ENCODE measurements at regions of chr2 and their contacts with region 1.

Region 1: DNA sequence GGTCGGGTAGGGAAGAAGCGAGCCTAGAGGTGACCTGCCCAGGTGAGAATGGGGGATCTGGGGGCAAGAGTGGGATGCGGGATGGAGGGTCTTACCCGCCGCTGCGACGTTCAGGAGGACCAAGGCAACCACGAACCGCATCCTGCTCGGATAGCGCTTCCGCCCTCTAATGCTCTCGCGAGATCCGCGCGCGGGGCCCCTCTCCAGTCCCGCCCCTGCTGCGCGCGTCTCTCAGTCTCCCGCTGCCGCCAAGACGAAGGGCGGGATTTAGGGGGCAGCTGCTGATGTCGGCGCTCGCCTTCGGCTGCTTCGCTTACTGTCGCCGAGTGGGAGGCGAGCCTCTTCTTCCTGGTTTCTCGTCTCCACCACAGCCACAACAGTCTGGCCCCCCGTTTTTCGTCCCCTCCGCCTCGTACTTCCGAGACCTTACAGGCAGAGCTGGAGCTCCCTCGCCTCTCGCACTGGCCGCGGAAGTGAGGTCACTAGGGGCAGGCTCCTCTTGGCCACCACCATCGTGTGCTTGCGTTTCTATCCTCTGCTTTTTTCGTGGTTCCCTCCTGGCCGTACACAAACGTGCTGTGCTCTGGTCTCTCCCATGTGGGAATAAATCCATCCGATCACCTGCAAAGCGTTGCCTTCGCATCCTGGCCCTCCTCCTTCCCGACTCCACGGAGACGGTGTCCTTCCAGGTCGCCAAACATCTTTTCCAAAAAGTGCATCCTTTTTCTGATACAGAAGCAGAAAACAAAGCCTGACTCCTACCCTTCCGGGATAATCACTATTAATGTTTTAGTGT is at the start of gene TGOLN2:
- DNase-seq: peak; percentile 88
- ATAC-seq: peak; percentile 92
- H3K4me3 Mint-ChIP-seq: peak within 1 kb of the TSS; percentile 97
- H3K27ac Mint-ChIP-seq: peak within 1 kb of the TSS; percentile 100
- H3K4me1 Mint-ChIP-seq: peaks cover 45% of the 10 kb centered on the region
- H3K27me3 Mint-ChIP-seq: no peaks in the 10 kb centered on the region
- CTCF ChIP-seq: no peak
- total RNA-seq, gene TGOLN2: 42.2 to 43.9 TPM (median 43.7 TPM) in 3 replicates

Region 2: GRCh38 chr2:85266146-85267041 is 61.6 kb before region 1 on chr2:
- CTCF ChIA-PET with region 1: no interaction called
- POLR2A ChIA-PET with region 1: no interaction called
- DNase-seq: peak; percentile 85
- ATAC-seq: peak; percentile 63
- H3K4me3 Mint-ChIP-seq: no peak overlapping the region
- H3K27ac Mint-ChIP-seq: peak overlapping the region; percentile 67
- H3K4me1 Mint-ChIP-seq: peaks cover 72% of the 10 kb centered on the region
- H3K27me3 Mint-ChIP-seq: no peaks in the 10 kb centered on the region
- CTCF ChIP-seq: peak; percentile 95

Region 3: GRCh38 chr2:85340034-85340892 is 12.2 kb after region 1 on chr2:
- CTCF ChIA-PET with region 1: no interaction called
- POLR2A ChIA-PET with region 1: no interaction called
- DNase-seq: no peak
- ATAC-seq: no peak
- H3K4me3 Mint-ChIP-seq: no peak overlapping the region
- H3K27ac Mint-ChIP-seq: no peak overlapping the region; the same call in 1 of the 2 replicates
- H3K4me1 Mint-ChIP-seq: peaks cover 17% of the 10 kb centered on the region
- H3K27me3 Mint-ChIP-seq: peaks cover 2% of the 10 kb centered on the region
- CTCF ChIP-seq: no peak

Region 4: GRCh38 chr2:85354286-85355072 is 26.5 kb after region 1 on chr2 and contains the starts of genes ELMOD3 and RETSAT:
- CTCF ChIA-PET with region 1: no interaction called
- POLR2A ChIA-PET with region 1: interaction called, 11 read pairs
- DNase-seq: peak; percentile 95
- ATAC-seq: peak; percentile 99
- H3K4me3 Mint-ChIP-seq: peak within 1 kb of the TSS; percentile 100
- H3K27ac Mint-ChIP-seq: peak within 1 kb of the TSS; percentile 96
- H3K4me1 Mint-ChIP-seq: peaks cover 16% of the 10 kb centered on the region
- H3K27me3 Mint-ChIP-seq: no peaks in the 10 kb centered on the region
- CTCF ChIP-seq: no peak
- total RNA-seq, gene ELMOD3: 9.7 to 10.8 TPM (median 10.6 TPM) in 3 replicates
- total RNA-seq, gene RETSAT: 18.9 to 24.4 TPM (median 21.6 TPM) in 3 replicates

Region 5: GRCh38 chr2:85457877-85458316 is 129.9 kb after region 1 on chr2:
- CTCF ChIA-PET with region 1: no interaction called
- POLR2A ChIA-PET with region 1: no interaction called
- DNase-seq: no peak
- ATAC-seq: no peak
- H3K4me3 Mint-ChIP-seq: no peak overlapping the region
- H3K27ac Mint-ChIP-seq: peak overlapping the region; percentile 2; the same call in 1 of the 2 replicates
- H3K4me1 Mint-ChIP-seq: peaks cover 47% of the 10 kb centered on the region
- H3K27me3 Mint-ChIP-seq: peaks cover 35% of the 10 kb centered on the region
- CTCF ChIP-seq: no peak

Measured in WTC11 (cell line).